ENCODE measurements at regions of chr5 and their contacts with region 1.

Region 1: DNA sequence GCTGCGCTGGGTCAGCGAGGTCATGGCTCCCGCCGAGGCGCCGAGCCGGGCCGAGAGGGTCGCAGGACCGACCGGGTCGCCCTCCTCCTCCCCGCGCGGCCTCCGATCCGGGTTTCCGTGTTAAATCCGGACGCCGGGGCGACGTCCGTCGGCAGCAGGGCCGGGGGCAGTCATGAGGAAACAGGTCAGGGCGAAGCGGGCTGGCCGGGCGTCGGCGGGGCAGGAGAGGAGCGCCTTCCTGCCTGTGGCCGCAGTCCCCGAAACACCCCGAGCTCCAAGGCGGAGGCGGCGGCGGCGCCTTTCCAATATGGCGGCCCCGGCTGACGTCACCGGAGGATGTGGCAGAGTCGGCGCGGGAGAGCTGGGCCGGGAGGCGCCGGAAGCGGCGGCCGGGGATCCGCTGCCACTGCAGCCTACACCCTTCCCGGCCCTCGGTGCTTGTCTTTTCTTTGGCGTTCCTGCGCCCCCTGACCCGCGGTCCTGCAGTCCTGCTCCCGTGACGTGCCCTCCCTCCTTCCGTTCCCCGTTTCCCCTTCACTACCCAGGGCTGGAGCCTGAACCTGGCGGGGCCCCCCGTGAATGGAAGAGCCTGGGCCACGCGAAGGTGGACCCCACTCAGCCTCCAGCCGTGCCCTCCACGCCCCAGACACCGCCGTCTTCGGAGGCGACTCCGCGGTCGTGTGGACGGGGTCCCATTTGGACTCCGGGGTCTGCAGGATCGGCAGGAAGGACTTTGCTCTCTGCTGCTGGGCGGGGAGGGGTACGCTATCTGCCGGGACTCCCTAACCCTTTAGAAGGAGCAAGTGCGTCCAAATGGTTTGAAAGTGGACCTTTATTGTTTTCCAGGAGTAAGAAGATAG is at the start of gene GOLPH3:
- DNase-seq: peak; percentile 91 to 97 (median 95)
- H3K4me3 ChIP-seq: peak within 1 kb of the TSS; percentile 74 to 100 (median 94)
- H3K27ac ChIP-seq: peak within 1 kb of the TSS; percentile 94 to 96
- H3K4me1 ChIP-seq: peaks cover 6 to 42% (median 28%) of the 10 kb centered on the region in 4 experiments
- H3K27me3 ChIP-seq: no peaks in the 10 kb centered on the region

Region 2: DNA sequence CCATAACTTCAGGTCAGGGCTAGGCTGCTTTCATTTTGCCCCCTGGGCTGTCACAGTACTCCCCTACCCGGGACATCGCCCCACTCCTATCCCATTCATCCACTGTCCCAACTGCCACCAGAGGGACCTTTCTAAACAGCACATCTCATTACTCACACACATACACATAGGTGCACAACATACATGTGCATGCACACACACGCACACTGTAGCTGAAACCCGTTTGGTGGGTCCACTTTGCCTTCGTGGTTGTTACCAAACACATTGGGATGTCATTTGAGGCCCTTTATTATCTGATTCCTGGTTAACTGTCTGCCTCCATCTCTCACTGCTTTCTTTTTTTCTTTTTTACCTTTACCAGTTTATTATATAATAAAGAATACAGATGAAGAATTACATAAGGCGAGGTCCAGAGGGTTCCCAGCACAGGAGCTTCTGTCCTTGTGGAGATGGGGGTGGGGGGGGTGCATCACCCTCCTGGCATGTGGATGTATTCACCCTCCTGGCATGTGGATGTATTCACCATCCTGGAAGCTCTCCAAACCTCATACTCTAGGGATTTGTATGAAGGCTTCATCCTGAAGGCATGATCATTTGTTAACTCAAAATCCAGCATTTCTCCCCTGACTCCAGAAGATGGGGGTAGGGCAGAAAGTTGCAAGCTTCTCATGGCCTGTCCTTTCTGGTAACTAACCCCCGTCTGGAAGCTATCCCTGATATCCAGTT is 186.1 kb before region 1 on chr5:
- CTCF ChIA-PET with region 1: no interaction called
- POLR2A ChIA-PET with region 1: no interaction called
- DNase-seq: no peak
- H3K4me3 ChIP-seq: no peak overlapping the region
- H3K27ac ChIP-seq: no peak overlapping the region
- H3K4me1 ChIP-seq: no peaks in the 10 kb centered on the region
- H3K27me3 ChIP-seq: no peaks in the 10 kb centered on the region

Region 3: GRCh38 chr5:32083981-32084430 is 90.2 kb before region 1 on chr5:
- CTCF ChIA-PET with region 1: no interaction called
- POLR2A ChIA-PET with region 1: no interaction called
- DNase-seq: peak in 2 of 3 donors; percentile 27 to 50
- H3K4me3 ChIP-seq: no peak overlapping the region
- H3K27ac ChIP-seq: no peak overlapping the region
- H3K4me1 ChIP-seq: peaks cover 0 to 5% (median 0%) of the 10 kb centered on the region in 4 experiments
- H3K27me3 ChIP-seq: no peaks in the 10 kb centered on the region

Region 4: DNA sequence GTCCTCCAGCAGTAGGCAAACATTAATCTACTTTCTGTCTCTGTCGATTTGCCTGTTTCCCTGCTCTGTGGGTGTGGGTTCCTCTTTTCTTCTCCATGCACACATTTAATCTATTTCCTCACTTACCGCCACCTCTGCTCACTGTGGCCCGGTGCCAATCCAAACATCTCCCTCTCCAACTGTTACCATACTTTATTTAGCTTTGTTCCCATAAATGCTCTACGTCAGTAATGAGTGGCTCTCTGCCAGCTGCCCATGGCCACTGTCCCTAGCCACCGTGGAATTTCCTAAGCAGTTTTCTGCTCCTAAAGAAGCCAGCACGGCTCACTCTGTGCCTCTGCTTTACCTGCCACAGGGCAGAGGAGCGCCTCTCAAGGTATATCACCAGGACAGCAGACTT is 19.4 kb after region 1 on chr5:
- CTCF ChIA-PET with region 1: interaction called, 8 read pairs
- POLR2A ChIA-PET with region 1: interaction called, 15 read pairs
- DNase-seq: peak; percentile 91 to 98 (median 98)
- H3K4me3 ChIP-seq: peak overlapping the region in 6 of 7 experiments; percentile 30 to 62 (median 46)
- H3K27ac ChIP-seq: peak overlapping the region; percentile 81 to 90
- H3K4me1 ChIP-seq: peaks cover 0 to 49% (median 24%) of the 10 kb centered on the region in 4 experiments
- H3K27me3 ChIP-seq: no peaks in the 10 kb centered on the region

Region 5: DNA sequence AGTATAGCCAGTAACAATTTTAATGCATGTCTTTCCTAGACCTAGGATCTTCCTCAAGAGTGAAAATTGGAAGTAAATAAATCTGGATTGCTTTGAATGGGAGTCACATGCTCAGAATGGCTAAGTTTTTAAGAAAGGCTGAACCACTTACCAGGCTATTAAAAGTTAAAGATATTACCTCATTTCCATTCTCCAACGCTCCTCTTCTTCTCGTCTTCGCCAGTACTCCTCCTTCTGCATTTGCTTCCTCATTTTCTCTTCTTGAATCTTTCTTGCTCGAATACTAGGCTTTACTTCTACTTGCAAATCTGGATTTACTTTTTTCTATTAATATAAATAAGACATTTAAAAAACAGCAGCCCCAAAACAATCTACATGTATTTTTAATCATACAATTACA is 220.7 kb after region 1 on chr5:
- CTCF ChIA-PET with region 1: no interaction called
- POLR2A ChIA-PET with region 1: no interaction called
- DNase-seq: no peak
- H3K4me3 ChIP-seq: no peak overlapping the region
- H3K27ac ChIP-seq: no peak overlapping the region
- H3K4me1 ChIP-seq: no peaks in the 10 kb centered on the region
- H3K27me3 ChIP-seq: no peaks in the 10 kb centered on the region

Region 6: DNA sequence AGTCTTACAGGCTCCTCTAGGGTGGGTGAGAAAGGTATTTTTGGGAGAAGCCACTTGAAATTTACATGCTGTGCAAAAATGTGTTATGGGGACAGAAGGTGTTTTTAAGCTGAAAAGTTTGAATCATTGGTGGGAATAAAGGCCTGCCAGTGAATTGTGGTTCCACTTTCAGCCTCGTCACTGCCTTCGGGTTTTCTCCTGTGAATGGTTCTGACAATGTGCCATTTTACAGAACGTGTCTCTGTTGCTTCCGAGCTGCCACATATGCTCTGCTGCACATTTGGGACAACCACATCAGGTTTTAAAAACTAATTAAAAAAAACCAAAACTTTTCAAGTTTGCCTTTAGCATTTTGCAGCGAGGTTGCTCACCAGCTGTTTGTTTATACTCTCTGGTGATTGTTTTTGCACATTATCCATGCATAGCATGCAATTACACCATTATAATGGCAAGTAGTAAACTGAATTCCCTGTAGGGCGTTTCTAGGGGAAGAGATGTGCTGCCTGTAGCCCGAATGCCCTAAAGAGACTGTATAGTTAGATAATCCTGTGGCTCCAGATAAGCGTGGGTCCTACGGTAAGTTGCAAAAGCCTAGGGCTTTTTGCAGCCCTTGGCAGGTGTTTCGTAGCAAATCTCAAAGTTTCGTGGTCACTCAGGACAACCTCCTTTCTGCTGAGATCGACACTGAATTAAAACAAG is 371.0 kb after region 1 on chr5:
- CTCF ChIA-PET with region 1: no interaction called
- POLR2A ChIA-PET with region 1: no interaction called
- DNase-seq: no peak
- H3K4me3 ChIP-seq: no peak overlapping the region
- H3K27ac ChIP-seq: no peak overlapping the region
- H3K4me1 ChIP-seq: peaks cover 0 to 5% (median 2%) of the 10 kb centered on the region in 4 experiments
- H3K27me3 ChIP-seq: no peaks in the 10 kb centered on the region